AG04450 (cell line): ENCODE measurements at regions of chr15 and their contacts with region 1.

Region 1: DNA sequence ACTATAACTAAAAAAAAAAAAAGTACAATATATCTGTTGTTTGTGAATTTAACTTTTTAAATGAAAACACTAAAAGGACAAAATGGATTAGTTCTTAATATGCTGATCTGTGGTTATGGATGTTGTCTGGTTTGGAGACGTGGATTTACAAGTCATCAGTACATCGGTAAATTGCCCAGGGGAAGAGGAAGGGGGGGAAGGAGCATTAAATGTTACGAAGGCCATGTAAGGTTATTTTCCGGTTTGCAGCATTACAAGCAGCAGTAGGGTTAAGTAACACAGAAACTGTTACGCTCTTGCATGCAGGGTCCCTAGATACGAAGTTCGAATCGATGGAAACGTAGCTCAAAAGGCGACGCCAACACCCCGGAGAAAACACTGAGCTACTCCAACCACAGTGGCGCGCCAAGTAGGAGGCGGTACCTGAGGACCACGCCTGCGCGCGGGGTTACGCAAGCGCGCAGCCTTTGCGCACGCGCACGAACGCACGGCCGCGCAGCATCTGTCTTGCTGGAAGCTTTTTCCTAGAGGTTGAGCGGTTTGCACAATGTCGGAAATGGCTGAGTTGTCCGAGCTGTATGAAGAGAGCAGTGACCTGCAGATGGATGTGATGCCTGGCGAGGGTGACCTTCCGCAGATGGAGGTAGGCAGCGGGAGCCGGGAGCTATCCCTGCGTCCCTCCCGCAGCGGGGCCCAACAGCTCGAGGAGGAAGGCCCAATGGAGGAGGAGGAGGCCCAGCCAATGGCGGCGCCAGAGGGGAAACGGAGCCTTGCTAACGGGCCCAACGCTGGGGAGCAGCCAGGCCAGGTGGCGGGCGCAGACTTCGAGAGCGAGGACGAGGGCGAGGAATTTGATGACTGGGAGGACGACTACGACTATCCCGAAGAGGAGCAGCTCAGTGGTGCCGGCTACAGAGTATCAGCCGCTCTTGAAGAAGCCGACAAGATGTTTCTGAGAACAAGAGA is at the start of gene EID1:
- DNase-seq: peak; percentile 90
- H3K4me3 ChIP-seq: peak within 1 kb of the TSS; percentile 87
- H3K27ac ChIP-seq: peak within 1 kb of the TSS; percentile 75
- H3K27me3 ChIP-seq: no peaks in the 10 kb centered on the region
- CTCF ChIP-seq: no peak
- polyA plus RNA-seq, gene EID1: 292 and 348 TPM in 2 replicates

Region 2: DNA sequence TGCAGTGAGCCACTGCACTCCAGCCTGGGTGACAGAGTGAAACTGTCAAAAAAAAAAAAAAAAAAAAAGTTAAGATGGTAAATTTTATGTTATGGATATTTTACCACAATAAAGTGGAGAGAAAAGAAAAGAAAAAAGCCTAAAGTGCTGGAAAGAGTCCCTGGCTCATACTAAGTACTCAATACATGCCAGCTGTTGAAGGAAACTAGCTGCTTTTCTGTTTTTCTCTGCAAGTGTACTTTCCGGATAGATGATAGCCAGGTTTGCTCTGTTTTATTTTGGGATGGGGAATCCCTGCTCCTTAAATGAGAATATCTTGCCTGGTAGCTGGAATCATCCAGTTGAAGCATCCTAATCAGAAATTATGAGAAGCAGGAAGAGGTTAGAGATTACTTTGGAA is 10.9 kb after region 1 on chr15:
- CTCF ChIA-PET with region 1: no interaction called
- POLR2A ChIA-PET with region 1: interaction called, 11 read pairs
- DNase-seq: no peak
- H3K4me3 ChIP-seq: no peak overlapping the region
- H3K27ac ChIP-seq: peak overlapping the region; percentile 60
- H3K27me3 ChIP-seq: no peaks in the 10 kb centered on the region
- CTCF ChIP-seq: no peak

Region 3: DNA sequence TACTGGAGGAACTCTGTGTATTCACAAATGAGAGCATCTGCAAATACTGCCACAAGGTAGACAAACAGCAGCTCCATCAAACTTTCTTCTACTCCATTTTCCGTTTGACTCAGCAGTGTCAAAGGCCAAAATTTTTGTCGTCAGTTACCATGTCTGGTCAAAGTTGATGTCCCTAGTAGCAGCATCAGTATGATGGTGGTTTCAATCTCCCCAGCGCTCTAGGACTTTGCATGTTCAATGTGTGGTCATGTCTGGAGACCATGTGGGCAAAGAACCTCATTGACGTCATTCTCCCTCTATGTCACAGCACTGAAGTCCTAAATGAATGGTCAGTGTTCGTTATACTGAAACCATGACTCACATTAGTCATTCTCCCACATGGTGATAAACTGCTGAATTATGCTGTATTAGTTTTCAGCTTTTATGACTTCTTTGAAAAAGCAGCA is 62.6 kb after region 1 on chr15:
- CTCF ChIA-PET with region 1: no interaction called
- POLR2A ChIA-PET with region 1: interaction called, 12 read pairs
- DNase-seq: peak; percentile 92
- H3K4me3 ChIP-seq: no peak overlapping the region
- H3K27ac ChIP-seq: peak overlapping the region; percentile 77
- H3K27me3 ChIP-seq: no peaks in the 10 kb centered on the region
- CTCF ChIP-seq: no peak